CD4-positive, alpha-beta memory T cell (primary cell): ENCODE measurements at regions of chr4 and their contacts with region 1.

Region 1: GRCh38 chr4:98260579-98261290 is 449 bp upstream of the RAP1GDS1 start:
- DNase-seq: peak in 4 of 5 donors; percentile 83 to 90 (median 84)
- H3K4me3 ChIP-seq: peak overlapping the region; percentile 70 to 82
- H3K4me3 Mint-ChIP-seq: peak overlapping the region; percentile 93 to 95 (median 94)
- H3K27ac ChIP-seq: peak overlapping the region; percentile 86
- H3K27ac Mint-ChIP-seq: peak overlapping the region; percentile 90 to 94 (median 93)
- H3K4me1 ChIP-seq: peaks cover 32% of the 10 kb centered on the region
- H3K4me1 Mint-ChIP-seq: peaks cover 37 to 60% (median 47%) of the 10 kb centered on the region in 4 donors
- H3K27me3 ChIP-seq: no peaks in the 10 kb centered on the region
- H3K27me3 Mint-ChIP-seq: no peaks in the 10 kb centered on the region

Region 2: GRCh38 chr4:97942951-97943350 is 317.8 kb before region 1 on chr4:
- CTCF ChIA-PET with region 1: no interaction called
- POLR2A ChIA-PET with region 1: no interaction called
- intact Hi-C with region 1: no loop called
- DNase-seq: no peak
- H3K4me3 ChIP-seq: no peak overlapping the region
- H3K4me3 Mint-ChIP-seq: no peak overlapping the region
- H3K27ac ChIP-seq: no peak overlapping the region
- H3K27ac Mint-ChIP-seq: no peak overlapping the region
- H3K4me1 ChIP-seq: no peaks in the 10 kb centered on the region
- H3K4me1 Mint-ChIP-seq: no peaks in the 10 kb centered on the region
- H3K27me3 ChIP-seq: no peaks in the 10 kb centered on the region
- H3K27me3 Mint-ChIP-seq: no peaks in the 10 kb centered on the region

Region 3: GRCh38 chr4:98143001-98143899 is 117.5 kb before region 1 on chr4 and contains the start of gene STPG2:
- CTCF ChIA-PET with region 1: interaction called, 17 read pairs
- POLR2A ChIA-PET with region 1: interaction called, 50 read pairs
- intact Hi-C with region 1: loop called (anchors 1 kb)
- DNase-seq: peak; percentile 91 to 92 (median 92)
- H3K4me3 ChIP-seq: peak within 1 kb of the TSS; percentile 67 to 69
- H3K4me3 Mint-ChIP-seq: peak within 1 kb of the TSS; percentile 88 to 96 (median 93)
- H3K27ac ChIP-seq: peak within 1 kb of the TSS; percentile 74
- H3K27ac Mint-ChIP-seq: peak within 1 kb of the TSS; percentile 97 to 98 (median 97)
- H3K4me1 ChIP-seq: peaks cover 23% of the 10 kb centered on the region
- H3K4me1 Mint-ChIP-seq: peaks cover 16 to 35% (median 23%) of the 10 kb centered on the region in 4 donors
- H3K27me3 ChIP-seq: no peaks in the 10 kb centered on the region
- H3K27me3 Mint-ChIP-seq: no peaks in the 10 kb centered on the region
- total RNA-seq, gene STPG2: 0.47 to 0.84 TPM

Region 4: GRCh38 chr4:98199209-98199608 is 61.5 kb before region 1 on chr4:
- CTCF ChIA-PET with region 1: no interaction called
- POLR2A ChIA-PET with region 1: no interaction called
- intact Hi-C with region 1: no loop called
- DNase-seq: no peak
- H3K4me3 ChIP-seq: no peak overlapping the region
- H3K4me3 Mint-ChIP-seq: no peak overlapping the region
- H3K27ac ChIP-seq: no peak overlapping the region
- H3K27ac Mint-ChIP-seq: no peak overlapping the region
- H3K4me1 ChIP-seq: peaks cover 12% of the 10 kb centered on the region
- H3K4me1 Mint-ChIP-seq: peaks cover 4 to 14% (median 10%) of the 10 kb centered on the region in 4 donors
- H3K27me3 ChIP-seq: no peaks in the 10 kb centered on the region
- H3K27me3 Mint-ChIP-seq: peaks cover 0 to 1% of the 10 kb centered on the region in 2 donors

Region 5: DNA sequence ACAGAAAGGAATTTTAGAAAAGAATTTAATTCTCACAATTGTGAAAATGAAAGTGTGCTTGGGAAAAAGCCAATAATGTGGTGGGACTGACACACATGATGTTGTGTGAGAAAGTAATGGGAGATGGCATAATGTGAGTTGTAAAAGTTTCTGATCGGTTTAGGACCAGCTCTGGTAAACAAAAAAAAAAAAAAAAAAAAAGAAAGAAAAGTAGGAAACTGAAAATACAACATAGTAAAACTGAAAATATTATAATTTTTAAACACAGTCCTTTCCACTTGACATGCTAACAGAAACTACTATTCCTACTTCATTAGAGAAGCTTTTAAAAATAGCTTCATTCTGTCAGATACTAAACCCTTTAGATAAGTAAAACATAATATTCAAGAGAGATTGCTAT is 28.6 kb after region 1 on chr4:
- CTCF ChIA-PET with region 1: interaction called, 6 read pairs
- POLR2A ChIA-PET with region 1: interaction called, 17 read pairs
- intact Hi-C with region 1: loop called (anchors 2 kb)
- DNase-seq: peak in 1 of 5 donors; percentile 6
- H3K4me3 ChIP-seq: no peak overlapping the region
- H3K4me3 Mint-ChIP-seq: peak overlapping the region in 6 of 8 donors; percentile 31 to 65 (median 58)
- H3K27ac ChIP-seq: no peak overlapping the region
- H3K27ac Mint-ChIP-seq: peak overlapping the region; percentile 53 to 90 (median 77)
- H3K4me1 ChIP-seq: peaks cover 36% of the 10 kb centered on the region
- H3K4me1 Mint-ChIP-seq: peaks cover 35 to 62% (median 46%) of the 10 kb centered on the region in 4 donors
- H3K27me3 ChIP-seq: no peaks in the 10 kb centered on the region
- H3K27me3 Mint-ChIP-seq: no peaks in the 10 kb centered on the region

Region 6: DNA sequence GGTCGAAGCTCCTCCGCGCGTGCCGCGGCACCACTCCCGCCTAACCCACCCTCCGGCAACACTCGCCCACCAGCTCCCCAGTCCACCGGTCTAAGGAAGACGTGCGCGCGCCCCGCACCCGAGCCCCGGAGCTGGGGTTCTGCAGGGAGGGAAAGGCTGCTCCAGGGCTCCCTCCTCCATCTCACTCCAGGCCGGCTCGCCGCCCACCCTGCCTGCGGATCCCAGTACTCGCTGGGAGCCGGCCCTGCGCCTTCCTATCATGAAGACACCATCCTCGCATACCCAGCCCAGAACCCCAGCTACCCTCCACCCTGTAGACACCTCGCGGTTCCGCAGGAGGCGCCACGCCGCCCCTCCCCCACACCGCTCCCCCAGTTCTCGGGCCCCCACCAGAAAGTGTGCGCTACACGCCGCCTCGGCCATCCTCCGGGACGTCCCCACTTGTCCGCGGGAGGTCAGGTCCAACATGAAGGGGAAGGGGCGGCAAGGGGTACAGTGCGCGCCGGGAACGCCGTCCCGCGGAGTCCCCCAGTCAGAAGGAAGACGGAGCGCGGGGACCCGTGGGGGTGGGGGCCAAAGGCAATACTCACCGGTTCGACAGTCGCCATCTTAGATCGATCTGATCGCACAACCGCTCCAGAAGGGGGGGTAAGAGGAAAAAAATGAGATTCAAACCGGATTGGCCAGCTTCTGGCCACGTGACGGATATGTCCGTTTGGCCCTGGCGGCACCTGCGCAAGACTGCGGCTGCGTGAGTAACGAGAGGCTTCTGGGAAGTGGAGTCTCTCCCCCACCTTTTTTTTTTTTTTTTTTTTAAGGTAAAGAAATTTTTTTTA is 668.0 kb after region 1 on chr4 and contains the start of gene EIF4E:
- CTCF ChIA-PET with region 1: no interaction called
- POLR2A ChIA-PET with region 1: interaction called, 17 read pairs
- intact Hi-C with region 1: loop called (anchors 2 kb)
- DNase-seq: peak; percentile 97 to 99 (median 98)
- H3K4me3 ChIP-seq: peak within 1 kb of the TSS; percentile 66 to 97
- H3K4me3 Mint-ChIP-seq: peak within 1 kb of the TSS; percentile 92 to 100 (median 98)
- H3K27ac ChIP-seq: peak within 1 kb of the TSS; percentile 82
- H3K27ac Mint-ChIP-seq: peak within 1 kb of the TSS; percentile 94 to 99 (median 98)
- H3K4me1 ChIP-seq: peaks cover 33% of the 10 kb centered on the region
- H3K4me1 Mint-ChIP-seq: peaks cover 17 to 58% (median 30%) of the 10 kb centered on the region in 4 donors
- H3K27me3 ChIP-seq: no peaks in the 10 kb centered on the region
- H3K27me3 Mint-ChIP-seq: peaks cover 0 to 2% of the 10 kb centered on the region in 2 donors
- total RNA-seq, gene EIF4E: 58.2 to 62.5 TPM

Region 7: GRCh38 chr4:99405433-99406115 is 1144.8 kb after region 1 on chr4:
- CTCF ChIA-PET with region 1: no interaction called
- POLR2A ChIA-PET with region 1: no interaction called
- intact Hi-C with region 1: loop called (anchors 5 kb)
- DNase-seq: peak; percentile 43 to 60 (median 49)
- H3K4me3 ChIP-seq: no peak overlapping the region
- H3K4me3 Mint-ChIP-seq: no peak overlapping the region
- H3K27ac ChIP-seq: no peak overlapping the region
- H3K27ac Mint-ChIP-seq: no peak overlapping the region
- H3K4me1 ChIP-seq: no peaks in the 10 kb centered on the region
- H3K4me1 Mint-ChIP-seq: peaks cover 0 to 4% (median 2%) of the 10 kb centered on the region in 4 donors
- H3K27me3 ChIP-seq: no peaks in the 10 kb centered on the region
- H3K27me3 Mint-ChIP-seq: peaks cover 0 to 1% of the 10 kb centered on the region in 2 donors